ENCODE measurements at regions of chr3 and their contacts with region 1.

Region 1: DNA sequence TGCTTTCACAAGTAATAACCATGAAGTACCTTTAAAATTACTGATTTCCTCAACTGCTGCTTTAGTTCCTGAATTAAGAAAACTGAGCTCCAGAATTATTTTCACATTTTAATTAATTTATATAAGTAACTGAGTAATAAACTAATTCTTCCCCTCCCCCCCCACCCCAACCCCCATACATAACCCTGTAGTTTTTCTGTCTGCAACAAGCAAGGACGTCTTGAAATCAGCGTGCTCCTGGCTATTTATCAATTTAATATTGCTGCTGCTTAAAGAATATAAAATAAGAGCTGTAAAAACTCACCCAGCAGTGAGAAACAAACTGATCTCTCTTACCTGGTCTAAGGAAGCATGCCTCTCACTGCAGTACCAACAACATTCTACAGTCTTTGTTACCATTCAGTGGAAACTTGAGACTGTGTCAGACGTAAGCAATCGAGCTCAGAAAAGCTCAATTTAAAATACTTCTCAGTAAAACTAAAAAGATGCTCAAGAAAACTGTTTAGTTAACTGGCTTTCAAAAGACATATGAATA is 121.0 kb downstream of the TFDP2 start:
- DNase-seq: no peak
- ATAC-seq: peak; percentile 87
- H3K4me3 Mint-ChIP-seq: peak overlapping the region; percentile 89
- H3K27ac Mint-ChIP-seq: peak overlapping the region; percentile 66
- H3K4me1 Mint-ChIP-seq: peaks cover 18% of the 10 kb centered on the region
- H3K27me3 Mint-ChIP-seq: no peaks in the 10 kb centered on the region
- CTCF ChIP-seq: no peak

Region 2: GRCh38 chr3:141796081-141796888 is 232.0 kb before region 1 on chr3:
- CTCF ChIA-PET with region 1: no interaction called
- POLR2A ChIA-PET with region 1: no interaction called
- intact Hi-C with region 1: loop called (anchors 2 kb)
- DNase-seq: peak; percentile 39
- ATAC-seq: peak; percentile 86
- H3K4me3 Mint-ChIP-seq: peak overlapping the region; percentile 85
- H3K27ac Mint-ChIP-seq: peak overlapping the region; percentile 85
- H3K4me1 Mint-ChIP-seq: peaks cover 34% of the 10 kb centered on the region
- H3K27me3 Mint-ChIP-seq: peaks cover 2% of the 10 kb centered on the region
- CTCF ChIP-seq: no peak

Region 3: DNA sequence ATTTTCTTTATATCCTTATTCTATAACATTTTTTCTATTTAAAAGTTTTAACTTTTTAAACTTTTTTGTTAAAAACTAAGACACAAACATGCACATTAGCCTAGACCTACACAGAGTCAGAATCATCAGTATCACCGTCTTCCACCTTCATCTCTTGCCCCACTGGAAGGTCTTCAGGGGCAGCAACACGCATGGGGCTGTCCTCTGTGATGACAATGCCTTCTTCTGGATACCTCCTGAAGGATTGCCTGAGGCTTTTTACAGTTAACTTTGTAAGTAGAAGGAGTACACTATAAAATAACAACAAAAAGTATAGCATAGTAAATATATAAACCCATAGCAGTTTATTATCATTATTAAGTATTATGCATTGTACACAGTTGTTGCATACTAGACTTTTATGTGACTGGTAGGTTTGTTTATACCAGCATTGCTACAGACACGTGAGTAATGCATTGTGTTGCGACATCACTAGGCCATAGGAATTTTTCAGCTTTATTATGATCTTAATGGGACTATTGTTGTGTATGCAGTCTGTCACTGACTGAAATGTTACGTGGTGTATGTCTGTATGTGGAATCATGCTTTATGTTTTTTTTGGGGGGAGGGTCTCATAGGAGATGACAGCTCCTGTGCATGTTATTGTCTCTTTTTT is 133.7 kb before region 1 on chr3:
- CTCF ChIA-PET with region 1: no interaction called
- POLR2A ChIA-PET with region 1: no interaction called
- intact Hi-C with region 1: no loop called
- DNase-seq: no peak
- ATAC-seq: no peak
- H3K4me3 Mint-ChIP-seq: no peak overlapping the region
- H3K27ac Mint-ChIP-seq: no peak overlapping the region
- H3K4me1 Mint-ChIP-seq: peaks cover 2% of the 10 kb centered on the region
- H3K27me3 Mint-ChIP-seq: no peaks in the 10 kb centered on the region
- CTCF ChIP-seq: no peak

Region 4: DNA sequence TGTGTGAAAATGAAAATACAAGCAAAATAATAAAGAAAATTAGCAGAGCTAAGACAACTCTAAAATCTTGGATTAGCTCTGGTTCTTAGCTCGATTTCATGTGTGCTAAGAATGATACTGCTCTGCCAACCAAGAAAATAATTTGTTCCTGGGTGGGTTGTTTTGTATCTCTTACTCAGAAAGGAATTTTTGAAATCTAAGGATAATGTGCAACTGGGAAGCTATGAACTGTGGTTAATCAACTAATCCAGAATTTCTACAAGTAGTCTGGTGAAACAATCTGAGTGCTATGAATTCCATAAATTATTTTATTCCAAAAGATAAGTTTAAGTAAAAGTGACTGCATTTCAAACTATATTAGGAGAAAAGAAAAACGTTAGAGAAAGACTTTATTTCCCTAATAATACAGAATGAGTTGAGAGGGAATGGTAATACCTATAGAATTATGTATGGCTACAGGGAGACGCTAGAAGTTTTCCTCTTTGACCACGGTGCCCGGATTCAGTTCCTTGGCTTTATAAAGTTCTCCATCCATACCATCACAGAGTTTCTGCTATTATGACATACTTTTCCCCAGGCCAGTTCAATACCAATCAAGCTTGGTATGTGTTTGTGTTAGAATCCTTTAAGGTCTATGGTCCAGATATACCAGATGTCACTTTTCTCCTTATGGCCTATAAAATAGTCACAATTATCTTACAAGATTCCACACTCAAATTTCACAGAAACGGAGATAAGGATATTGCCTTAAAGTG is 29.2 kb after region 1 on chr3:
- CTCF ChIA-PET with region 1: no interaction called
- POLR2A ChIA-PET with region 1: no interaction called
- intact Hi-C with region 1: loop called (anchors 1 kb)
- DNase-seq: no peak
- ATAC-seq: no peak
- H3K4me3 Mint-ChIP-seq: no peak overlapping the region
- H3K27ac Mint-ChIP-seq: no peak overlapping the region
- H3K4me1 Mint-ChIP-seq: peaks cover 5% of the 10 kb centered on the region
- H3K27me3 Mint-ChIP-seq: no peaks in the 10 kb centered on the region
- CTCF ChIP-seq: no peak

Region 5: GRCh38 chr3:142148792-142149672 is 120.7 kb after region 1 on chr3 and contains the start of gene TFDP2:
- CTCF ChIA-PET with region 1: no interaction called
- POLR2A ChIA-PET with region 1: no interaction called
- intact Hi-C with region 1: loop called (anchors 5 kb)
- DNase-seq: peak; percentile 78
- ATAC-seq: peak; percentile 99
- H3K4me3 Mint-ChIP-seq: peak within 1 kb of the TSS; percentile 86
- H3K27ac Mint-ChIP-seq: peak within 1 kb of the TSS; percentile 72
- H3K4me1 Mint-ChIP-seq: peaks cover 14% of the 10 kb centered on the region
- H3K27me3 Mint-ChIP-seq: no peaks in the 10 kb centered on the region
- CTCF ChIP-seq: no peak
- total RNA-seq, gene TFDP2: 20.0 and 23.1 TPM in 2 replicates

Region 6: GRCh38 chr3:142226484-142226883 is 198.2 kb after region 1 on chr3:
- CTCF ChIA-PET with region 1: no interaction called
- POLR2A ChIA-PET with region 1: no interaction called
- intact Hi-C with region 1: loop called (anchors 1 kb)
- DNase-seq: no peak
- ATAC-seq: no peak
- H3K4me3 Mint-ChIP-seq: peak overlapping the region; percentile 38
- H3K27ac Mint-ChIP-seq: no peak overlapping the region
- H3K4me1 Mint-ChIP-seq: peaks cover 6% of the 10 kb centered on the region
- H3K27me3 Mint-ChIP-seq: no peaks in the 10 kb centered on the region
- CTCF ChIP-seq: no peak

Measured in activated B cell treated with CpG ODN at 0.5 μM for 24 hours (primary cell).